ENCODE measurements at regions of chr12 and their contacts with region 1.

Region 1: GRCh38 chr12:112386726-112387125 is 4.5 kb upstream of the HECTD4 start:
- DNase-seq: no peak
- CTCF ChIP-seq: no peak

Region 2: GRCh38 chr12:112066566-112066965 is 320.2 kb before region 1 on chr12:
- CTCF ChIA-PET with region 1: no interaction called
- POLR2A ChIA-PET with region 1: no interaction called
- DNase-seq: no peak
- CTCF ChIP-seq: no peak

Region 3: DNA sequence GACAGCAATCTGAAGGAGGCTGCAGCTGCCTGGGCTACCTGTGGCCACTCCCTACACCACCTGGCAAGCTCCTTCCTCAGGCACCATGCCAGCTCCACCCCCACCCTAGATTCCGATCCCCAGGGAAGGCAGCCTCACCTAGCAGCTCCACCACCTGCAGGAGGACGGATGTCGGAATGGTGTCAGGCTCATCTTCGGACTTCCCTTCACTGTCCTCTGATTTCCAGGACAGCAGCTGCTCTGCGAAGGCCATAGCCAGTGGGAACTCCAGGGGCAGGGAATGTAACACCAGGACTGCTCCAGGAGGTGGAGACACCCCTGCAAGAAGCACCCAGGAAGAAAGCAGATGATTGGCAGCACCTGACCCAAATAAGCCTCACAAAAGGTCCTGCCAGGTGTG is 196.1 kb before region 1 on chr12:
- CTCF ChIA-PET with region 1: interaction called, 82 read pairs
- POLR2A ChIA-PET with region 1: no interaction called
- DNase-seq: no peak
- CTCF ChIP-seq: no peak

Region 4: GRCh38 chr12:112256780-112257179 is 129.9 kb before region 1 on chr12:
- CTCF ChIA-PET with region 1: interaction called, 11 read pairs
- POLR2A ChIA-PET with region 1: no interaction called
- DNase-seq: no peak
- CTCF ChIP-seq: no peak

Region 5: DNA sequence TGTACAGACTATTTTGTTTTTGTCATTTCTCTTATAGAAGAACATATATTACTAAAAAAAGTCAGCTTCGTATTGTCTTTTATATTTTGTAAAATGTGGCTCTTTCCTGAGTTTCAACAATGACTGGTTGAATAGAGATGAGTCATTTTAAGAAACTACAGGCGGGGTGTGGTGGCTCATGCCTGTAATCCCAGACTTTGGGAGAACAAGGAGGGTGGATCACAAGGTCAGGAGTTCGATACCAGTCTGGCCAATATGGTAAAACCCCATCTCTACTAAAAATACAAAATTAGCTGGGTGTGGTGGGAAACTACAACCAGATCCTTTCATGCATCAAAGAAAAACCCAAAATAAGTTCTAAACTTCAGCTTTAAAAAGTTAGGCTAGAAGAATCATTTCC is 33.3 kb before region 1 on chr12:
- CTCF ChIA-PET with region 1: interaction called, 11 read pairs
- POLR2A ChIA-PET with region 1: no interaction called
- DNase-seq: no peak
- CTCF ChIP-seq: no peak

Region 6: DNA sequence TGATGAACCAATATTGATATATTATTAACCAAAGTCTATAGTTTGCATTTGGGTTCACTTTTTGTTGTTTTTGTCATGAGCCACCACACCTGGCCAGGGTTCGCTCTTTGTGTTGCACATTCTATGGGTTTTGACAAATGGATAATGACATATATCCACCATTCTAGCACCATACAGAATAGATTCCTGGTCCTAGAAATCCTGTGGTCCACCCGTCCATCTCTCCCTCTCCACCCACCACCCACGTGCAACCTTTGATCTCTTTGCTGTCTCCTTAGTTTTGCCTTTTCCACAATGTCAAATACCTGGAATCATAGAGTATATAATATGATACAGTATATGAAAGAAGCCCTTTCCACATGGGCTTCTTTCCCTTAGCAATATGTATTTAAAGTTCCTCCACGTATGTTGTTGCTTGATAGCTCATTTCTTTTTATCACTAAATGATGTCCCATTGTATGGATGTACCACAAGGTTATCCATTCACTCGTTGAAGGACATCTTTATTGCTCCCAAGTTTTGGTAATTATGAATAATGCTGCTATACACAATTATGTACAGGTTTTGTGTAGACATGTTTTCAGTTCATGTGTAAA is 15.3 kb after region 1 on chr12:
- CTCF ChIA-PET with region 1: interaction called, 14 read pairs
- POLR2A ChIA-PET with region 1: no interaction called
- DNase-seq: no peak
- CTCF ChIP-seq: no peak